Activated T-helper 1 cell treated with anti-CD3 and anti-CD28 coated beads, Interleukin-12 subunit alpha, Interleukin-12 subunit beta, Interleukin-2, Interleukin-4 antibody, amounts not matched to agents 30 ng/mL and 10 ng/mL and 1 ng/mL, durations not matched to agents 14 hours and 24 hours and 36 hours (primary cell): ENCODE measurements at regions of chr5 and their contacts with region 1.

Region 1: DNA sequence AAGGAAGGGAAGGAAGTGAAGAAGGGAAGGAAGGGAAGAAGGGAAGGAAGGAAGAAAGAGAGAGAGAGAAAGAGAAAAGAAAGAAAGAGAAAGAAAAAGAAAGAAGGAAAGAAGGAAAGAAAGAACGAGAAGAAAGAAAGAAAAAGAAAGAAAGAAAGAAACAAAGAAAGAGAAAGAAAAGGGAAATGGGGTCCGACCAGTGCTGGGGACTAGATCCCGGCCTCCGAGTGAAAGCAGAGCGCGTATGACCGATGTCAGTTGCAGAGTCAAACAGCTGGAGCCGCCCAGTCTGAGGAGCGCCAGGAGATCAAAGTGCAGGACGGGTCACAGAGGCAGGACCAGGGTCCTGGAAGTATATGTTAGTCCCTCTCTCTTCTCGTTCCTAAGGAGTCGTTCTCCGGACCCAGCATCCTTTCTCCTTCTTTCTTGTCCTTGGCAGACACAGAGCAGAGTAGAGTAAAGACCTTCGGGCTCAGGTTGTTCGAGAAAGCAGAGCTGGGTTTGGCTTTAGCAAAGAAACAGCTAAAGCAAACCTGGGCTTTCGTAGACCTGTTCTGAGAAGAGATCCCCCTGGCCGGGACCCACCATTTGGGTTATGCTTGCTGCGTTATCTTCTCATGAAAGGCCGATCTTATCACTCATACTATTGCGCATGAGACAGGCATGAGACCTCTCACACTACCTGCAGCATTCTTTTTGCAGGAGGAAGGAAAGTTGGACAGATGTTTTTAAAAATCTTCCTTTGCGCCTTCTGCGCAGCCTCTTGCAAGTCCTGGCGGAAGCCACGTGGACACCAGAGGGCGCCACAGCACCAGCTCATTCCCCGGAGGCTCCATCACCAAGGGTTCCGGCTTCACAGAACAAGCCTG is 305.2 kb upstream of the MSX2 start:
- DNase-seq: peak; percentile 58
- H3K4me3 Mint-ChIP-seq: no peak overlapping the region
- H3K27ac Mint-ChIP-seq: no peak overlapping the region
- H3K4me1 Mint-ChIP-seq: peaks cover 7% of the 10 kb centered on the region
- H3K27me3 Mint-ChIP-seq: peaks cover 9% of the 10 kb centered on the region

Region 2: DNA sequence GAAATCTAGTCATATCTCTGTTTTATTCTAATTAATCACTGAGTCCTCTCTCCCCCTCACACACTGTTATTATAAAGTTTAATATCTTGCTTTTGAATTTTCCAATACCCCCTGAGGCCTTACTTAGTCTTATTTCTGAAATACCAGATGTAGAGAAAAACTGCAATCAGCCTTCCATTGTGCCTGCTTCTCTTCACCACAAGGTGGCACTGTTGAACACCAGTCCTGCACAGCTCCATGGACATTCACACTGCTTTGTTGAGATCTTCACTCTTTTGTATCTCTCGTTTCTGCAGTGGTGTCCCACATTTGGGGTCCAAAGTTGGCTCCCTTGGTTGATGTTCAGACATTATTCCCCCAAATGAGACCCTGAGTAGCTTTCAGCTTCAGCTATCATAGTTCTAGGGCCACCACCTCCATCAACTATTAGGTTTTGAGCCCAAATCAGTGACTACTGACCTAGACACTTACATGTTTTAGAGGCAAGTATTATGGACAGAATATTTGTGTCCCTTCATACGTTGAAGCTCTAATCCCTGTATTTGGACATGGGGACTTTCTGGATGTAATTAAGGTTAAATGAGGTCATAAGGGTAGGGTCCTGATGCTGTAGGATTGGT is 827.0 kb before region 1 on chr5:
- intact Hi-C with region 1: no loop called
- DNase-seq: no peak
- H3K4me3 Mint-ChIP-seq: no peak overlapping the region
- H3K27ac Mint-ChIP-seq: no peak overlapping the region
- H3K4me1 Mint-ChIP-seq: no peaks in the 10 kb centered on the region
- H3K27me3 Mint-ChIP-seq: no peaks in the 10 kb centered on the region

Region 3: GRCh38 chr5:174402221-174402815 is 16.8 kb before region 1 on chr5:
- intact Hi-C with region 1: no loop called
- DNase-seq: no peak
- H3K4me3 Mint-ChIP-seq: no peak overlapping the region
- H3K27ac Mint-ChIP-seq: no peak overlapping the region
- H3K4me1 Mint-ChIP-seq: no peaks in the 10 kb centered on the region
- H3K27me3 Mint-ChIP-seq: peaks cover 1% of the 10 kb centered on the region

Region 4: DNA sequence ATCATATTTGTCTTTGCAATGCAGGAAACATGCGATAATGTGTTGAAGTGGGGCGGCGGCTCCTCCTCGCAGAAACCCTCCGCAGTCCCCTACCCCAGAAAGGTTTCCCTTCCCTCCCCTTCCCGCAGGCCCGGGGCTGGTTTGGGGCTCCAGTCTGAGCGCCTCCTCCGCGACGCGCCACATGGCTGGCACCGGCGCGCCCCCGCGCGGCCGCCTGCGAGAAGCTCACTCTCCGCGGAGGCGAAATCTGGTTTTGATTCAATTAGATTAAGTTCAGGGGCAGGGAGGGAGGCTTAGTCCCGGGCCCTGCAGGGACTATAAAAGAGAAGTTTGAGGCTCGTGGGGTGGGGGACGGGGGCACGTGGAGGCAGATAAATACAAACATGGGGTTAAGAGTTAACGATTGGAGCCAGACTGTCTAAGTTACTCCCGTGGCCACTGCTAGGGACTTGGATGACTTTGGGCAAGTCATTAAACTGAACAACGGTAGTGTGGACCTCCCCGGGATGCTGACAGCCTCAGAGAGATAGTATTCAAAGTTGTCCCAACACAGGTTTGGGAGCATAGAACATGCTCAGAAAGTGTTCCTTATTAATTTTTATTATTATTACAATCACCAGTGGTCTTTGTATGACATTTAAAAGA is 374.6 kb after region 1 on chr5:
- intact Hi-C with region 1: loop called (anchors 1 kb)
- DNase-seq: peak; percentile 26
- H3K4me3 Mint-ChIP-seq: no peak overlapping the region
- H3K27ac Mint-ChIP-seq: no peak overlapping the region
- H3K4me1 Mint-ChIP-seq: peaks cover 8% of the 10 kb centered on the region
- H3K27me3 Mint-ChIP-seq: peaks cover 4% of the 10 kb centered on the region

Region 5: DNA sequence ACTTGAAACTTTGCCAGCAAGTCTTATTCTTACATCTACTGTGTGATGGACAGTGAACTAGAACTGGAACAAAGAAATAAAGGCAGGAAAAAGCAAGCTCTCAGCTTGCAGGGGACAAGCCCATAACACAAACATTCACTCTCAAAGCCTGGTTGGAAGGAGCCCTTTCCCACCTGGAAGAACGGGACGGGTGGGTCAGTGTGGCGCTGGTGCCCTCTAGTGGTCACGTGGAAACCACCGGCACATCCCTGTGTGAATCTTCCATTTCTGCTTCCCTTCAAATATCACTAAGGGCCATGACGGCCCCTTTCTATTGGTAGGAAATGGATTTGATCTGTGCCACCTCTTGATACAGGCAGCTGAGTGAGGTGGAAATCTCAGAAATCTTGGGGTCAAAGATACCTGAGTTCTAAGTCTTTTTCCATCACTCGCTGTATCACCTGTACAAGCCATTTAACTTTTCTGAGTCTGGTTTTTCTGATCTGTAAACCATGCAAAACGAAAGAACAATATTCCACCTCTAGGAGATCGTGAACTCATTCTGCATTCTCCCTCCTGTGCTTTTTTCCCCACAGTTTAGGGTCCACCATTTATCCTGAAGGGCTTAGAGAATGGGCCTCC is 516.8 kb after region 1 on chr5:
- intact Hi-C with region 1: loop called (anchors 2 kb)
- DNase-seq: no peak
- H3K4me3 Mint-ChIP-seq: no peak overlapping the region
- H3K27ac Mint-ChIP-seq: no peak overlapping the region
- H3K4me1 Mint-ChIP-seq: no peaks in the 10 kb centered on the region
- H3K27me3 Mint-ChIP-seq: peaks cover 1% of the 10 kb centered on the region